PC-9 (cell line): ENCODE measurements at regions of chr11 and their contacts with region 1.

Region 1: GRCh38 chr11:83938148-83938547 is 652.0 kb upstream of the CCDC90B start:
- DNase-seq: no peak
- H3K4me3 ChIP-seq: no peak overlapping the region
- H3K27ac ChIP-seq: no peak overlapping the region
- H3K4me1 ChIP-seq: no peaks in the 10 kb centered on the region
- H3K27me3 ChIP-seq: no peaks in the 10 kb centered on the region
- CTCF ChIP-seq: no peak

Region 2: DNA sequence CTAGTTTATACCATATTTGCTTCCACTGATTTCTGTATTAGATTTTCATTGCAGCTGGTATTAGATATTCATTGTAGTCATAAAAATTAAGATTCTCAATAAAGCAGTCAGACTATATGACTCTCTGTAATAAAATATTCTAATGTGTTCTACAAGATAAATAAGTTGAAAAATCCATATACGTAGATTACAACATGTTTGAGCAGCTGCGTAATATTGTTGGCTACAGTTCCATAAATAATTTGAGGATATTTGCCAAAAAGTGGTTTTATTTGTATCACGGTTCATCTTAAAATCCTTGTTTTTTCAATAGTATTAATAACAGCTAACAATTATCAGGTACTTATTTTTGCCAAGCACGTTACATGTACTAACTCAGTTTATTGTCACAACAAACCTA is 16.6 kb after region 1 on chr11:
- CTCF ChIA-PET with region 1: no interaction called
- POLR2A ChIA-PET with region 1: interaction called, 10 read pairs
- intact Hi-C with region 1: no loop called
- DNase-seq: no peak
- H3K4me3 ChIP-seq: no peak overlapping the region
- H3K27ac ChIP-seq: no peak overlapping the region
- H3K4me1 ChIP-seq: no peaks in the 10 kb centered on the region
- H3K27me3 ChIP-seq: no peaks in the 10 kb centered on the region
- CTCF ChIP-seq: no peak

Region 3: GRCh38 chr11:83998921-83999320 is 60.8 kb after region 1 on chr11:
- CTCF ChIA-PET with region 1: no interaction called
- POLR2A ChIA-PET with region 1: no interaction called
- intact Hi-C with region 1: no loop called
- DNase-seq: no peak
- H3K4me3 ChIP-seq: no peak overlapping the region
- H3K27ac ChIP-seq: no peak overlapping the region
- H3K4me1 ChIP-seq: no peaks in the 10 kb centered on the region
- H3K27me3 ChIP-seq: no peaks in the 10 kb centered on the region
- CTCF ChIP-seq: no peak